IMR-90 (cell line): ENCODE measurements at regions of chr2 and their contacts with region 1.

Region 1: GRCh38 chr2:36597532-36598377 is at the start of gene FEZ2:
- DNase-seq: peak; percentile 72
- ATAC-seq: peak; percentile 99
- H3K4me3 ChIP-seq: peak within 1 kb of the TSS; percentile 85
- H3K27ac ChIP-seq: peak within 1 kb of the TSS; percentile 77
- H3K4me1 ChIP-seq: peaks cover 8% of the 10 kb centered on the region
- H3K27me3 ChIP-seq: no peaks in the 10 kb centered on the region
- CTCF ChIP-seq: no peak
- POLR2A ChIP-seq: 0 out of 2 replicates have a peak, but pooled peaks have one; percentile 56
- RAD21 ChIP-seq: no peak
- total RNA-seq, gene FEZ2: 19.4 and 43.3 TPM in 2 replicates

Region 2: DNA sequence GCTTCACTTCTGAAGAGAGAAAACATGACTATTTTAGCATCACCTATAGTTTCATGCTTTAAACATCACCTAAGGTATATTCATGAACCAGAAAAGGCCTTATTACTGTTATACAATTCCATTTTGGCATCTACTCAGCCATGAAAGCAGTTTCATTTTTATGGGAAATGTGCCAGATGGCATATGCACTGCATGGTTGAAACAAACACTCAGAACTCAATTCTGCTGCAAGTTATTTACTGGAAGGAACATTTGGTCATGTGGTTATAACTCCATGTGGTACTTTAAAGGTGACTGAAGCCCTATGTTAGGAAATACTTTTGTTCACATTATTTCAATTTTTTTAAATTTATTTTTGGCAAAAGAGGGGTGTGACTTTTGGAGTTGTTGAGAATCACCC is 529.7 kb before region 1 on chr2:
- CTCF ChIA-PET with region 1: no interaction called
- POLR2A ChIA-PET with region 1: no interaction called
- dilution Hi-C with region 1: no loop called
- in situ Hi-C with region 1: no loop called
- intact Hi-C with region 1: no loop called
- DNase-seq: no peak
- ATAC-seq: no peak
- H3K4me3 ChIP-seq: no peak overlapping the region
- H3K27ac ChIP-seq: no peak overlapping the region
- H3K4me1 ChIP-seq: no peaks in the 10 kb centered on the region
- H3K27me3 ChIP-seq: no peaks in the 10 kb centered on the region
- CTCF ChIP-seq: no peak
- POLR2A ChIP-seq: no peak
- RAD21 ChIP-seq: no peak

Region 3: GRCh38 chr2:36413218-36413617 is 184.5 kb before region 1 on chr2:
- CTCF ChIA-PET with region 1: no interaction called
- POLR2A ChIA-PET with region 1: no interaction called
- dilution Hi-C with region 1: no loop called
- in situ Hi-C with region 1: no loop called
- intact Hi-C with region 1: no loop called
- DNase-seq: peak; percentile 47
- ATAC-seq: no peak; the same call in 1 of the 2 replicates
- H3K4me3 ChIP-seq: no peak overlapping the region
- H3K27ac ChIP-seq: 0 out of 2 replicates have a peak overlapping the region, but pooled peaks have one; percentile 4
- H3K4me1 ChIP-seq: peaks cover 28% of the 10 kb centered on the region
- H3K27me3 ChIP-seq: no peaks in the 10 kb centered on the region
- CTCF ChIP-seq: no peak
- POLR2A ChIP-seq: no peak
- RAD21 ChIP-seq: no peak

Region 4: DNA sequence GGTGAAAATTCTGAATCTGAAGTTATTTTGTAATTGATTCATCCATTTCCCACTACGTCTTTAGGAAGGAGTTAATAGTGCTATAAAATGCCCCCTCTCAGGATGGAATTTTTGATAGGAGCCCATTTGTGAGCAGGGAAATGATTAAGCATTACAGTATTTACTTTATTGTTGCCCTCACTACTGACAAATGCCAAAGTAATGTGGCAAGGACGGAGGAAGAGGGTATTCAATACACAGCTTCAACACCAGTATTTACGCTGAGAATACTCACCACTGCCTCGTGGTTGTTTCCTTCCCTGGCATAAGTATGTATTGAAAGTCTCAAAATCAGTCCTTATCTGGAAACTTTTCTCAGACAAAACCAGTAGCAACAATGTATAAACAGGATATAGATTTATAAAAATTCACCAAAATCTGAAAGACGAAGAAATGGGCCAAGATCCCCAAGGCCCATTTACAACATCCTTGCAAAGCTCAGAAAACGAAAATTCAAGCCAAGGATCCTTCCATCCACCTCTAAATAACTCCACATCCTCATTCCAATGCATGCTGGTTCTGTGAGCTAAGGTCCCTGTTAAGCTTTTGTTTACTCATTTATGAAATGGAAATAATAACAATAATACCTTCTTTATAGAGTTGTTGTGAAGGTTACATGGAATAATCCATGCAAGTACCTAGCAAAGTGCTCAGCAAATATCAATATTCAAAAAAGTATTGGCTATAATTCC is 29.1 kb before region 1 on chr2:
- CTCF ChIA-PET with region 1: no interaction called
- POLR2A ChIA-PET with region 1: no interaction called
- dilution Hi-C with region 1: no loop called
- in situ Hi-C with region 1: no loop called
- intact Hi-C with region 1: loop called (anchors 1 kb)
- DNase-seq: peak; percentile 66
- ATAC-seq: peak; percentile 63
- H3K4me3 ChIP-seq: no peak overlapping the region
- H3K27ac ChIP-seq: peak overlapping the region; percentile 73
- H3K4me1 ChIP-seq: peaks cover 10% of the 10 kb centered on the region
- H3K27me3 ChIP-seq: no peaks in the 10 kb centered on the region
- CTCF ChIP-seq: no peak
- POLR2A ChIP-seq: peak; percentile 23; the same call in 1 of the 2 replicates
- RAD21 ChIP-seq: no peak

Region 5: GRCh38 chr2:36800381-36800780 is 202.6 kb after region 1 on chr2:
- CTCF ChIA-PET with region 1: no interaction called
- POLR2A ChIA-PET with region 1: no interaction called
- dilution Hi-C with region 1: no loop called
- in situ Hi-C with region 1: no loop called
- intact Hi-C with region 1: no loop called
- DNase-seq: no peak
- ATAC-seq: no peak
- H3K4me3 ChIP-seq: no peak overlapping the region
- H3K27ac ChIP-seq: no peak overlapping the region
- H3K4me1 ChIP-seq: no peaks in the 10 kb centered on the region
- H3K27me3 ChIP-seq: peaks cover 28% of the 10 kb centered on the region
- CTCF ChIP-seq: no peak
- POLR2A ChIP-seq: no peak
- RAD21 ChIP-seq: no peak